A673 (cell line): ENCODE measurements at regions of chr11 and their contacts with region 1.

Region 1: DNA sequence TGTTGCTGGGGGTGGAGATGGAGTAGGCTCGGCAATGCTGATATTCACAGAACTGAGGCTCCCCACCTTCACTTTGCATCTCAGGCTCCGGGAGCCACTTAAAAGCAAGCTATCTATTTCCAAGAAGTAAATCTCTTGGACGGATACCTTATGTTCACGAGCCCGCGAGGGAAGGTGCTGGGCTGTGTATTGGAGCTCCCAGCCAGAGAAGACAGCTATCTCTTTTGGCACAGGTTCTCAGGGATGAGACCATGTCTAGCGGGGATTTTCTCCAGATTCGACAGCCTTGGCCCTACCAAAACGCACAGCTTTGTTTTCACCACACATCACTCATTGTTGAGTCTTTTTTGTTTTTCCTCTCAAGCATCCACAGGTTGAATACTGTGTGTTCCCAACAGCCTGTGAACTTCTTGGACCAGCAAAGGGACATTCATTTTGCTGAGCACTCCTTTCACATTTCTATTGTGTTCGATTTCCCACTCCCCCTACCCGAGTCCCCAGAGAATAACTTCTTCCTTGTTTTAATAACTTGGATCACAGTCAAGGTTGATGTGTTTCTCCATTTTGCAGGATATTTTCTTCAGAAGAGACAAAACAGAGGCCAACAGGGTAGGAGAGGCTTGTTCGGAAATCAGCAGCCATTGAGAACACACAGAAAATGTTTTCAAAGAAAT is 23.3 kb downstream of the WT1 start:
- DNase-seq: no peak
- H3K4me3 ChIP-seq: no peak overlapping the region
- H3K27ac ChIP-seq: no peak overlapping the region
- H3K4me1 ChIP-seq: no peaks in the 10 kb centered on the region
- H3K27me3 ChIP-seq: peaks cover 7% of the 10 kb centered on the region
- CTCF ChIP-seq: no peak

Region 2: GRCh38 chr11:32006799-32007388 is 405.2 kb before region 1 on chr11:
- CTCF ChIA-PET with region 1: no interaction called
- POLR2A ChIA-PET with region 1: no interaction called
- intact Hi-C with region 1: no loop called
- DNase-seq: peak; percentile 89
- H3K4me3 ChIP-seq: no peak overlapping the region
- H3K27ac ChIP-seq: no peak overlapping the region
- H3K4me1 ChIP-seq: no peaks in the 10 kb centered on the region
- H3K27me3 ChIP-seq: peaks cover 91% of the 10 kb centered on the region
- CTCF ChIP-seq: peak; percentile 100

Region 3: GRCh38 chr11:32466279-32466915 is 54.3 kb after region 1 on chr11:
- CTCF ChIA-PET with region 1: no interaction called
- POLR2A ChIA-PET with region 1: interaction called, 11 read pairs
- intact Hi-C with region 1: no loop called
- DNase-seq: no peak
- H3K4me3 ChIP-seq: no peak overlapping the region
- H3K27ac ChIP-seq: no peak overlapping the region
- H3K4me1 ChIP-seq: no peaks in the 10 kb centered on the region
- H3K27me3 ChIP-seq: peaks cover 46% of the 10 kb centered on the region
- CTCF ChIP-seq: no peak